MCF 10A (cell line): ENCODE measurements at regions of chr15 and their contacts with region 1.

Region 1: DNA sequence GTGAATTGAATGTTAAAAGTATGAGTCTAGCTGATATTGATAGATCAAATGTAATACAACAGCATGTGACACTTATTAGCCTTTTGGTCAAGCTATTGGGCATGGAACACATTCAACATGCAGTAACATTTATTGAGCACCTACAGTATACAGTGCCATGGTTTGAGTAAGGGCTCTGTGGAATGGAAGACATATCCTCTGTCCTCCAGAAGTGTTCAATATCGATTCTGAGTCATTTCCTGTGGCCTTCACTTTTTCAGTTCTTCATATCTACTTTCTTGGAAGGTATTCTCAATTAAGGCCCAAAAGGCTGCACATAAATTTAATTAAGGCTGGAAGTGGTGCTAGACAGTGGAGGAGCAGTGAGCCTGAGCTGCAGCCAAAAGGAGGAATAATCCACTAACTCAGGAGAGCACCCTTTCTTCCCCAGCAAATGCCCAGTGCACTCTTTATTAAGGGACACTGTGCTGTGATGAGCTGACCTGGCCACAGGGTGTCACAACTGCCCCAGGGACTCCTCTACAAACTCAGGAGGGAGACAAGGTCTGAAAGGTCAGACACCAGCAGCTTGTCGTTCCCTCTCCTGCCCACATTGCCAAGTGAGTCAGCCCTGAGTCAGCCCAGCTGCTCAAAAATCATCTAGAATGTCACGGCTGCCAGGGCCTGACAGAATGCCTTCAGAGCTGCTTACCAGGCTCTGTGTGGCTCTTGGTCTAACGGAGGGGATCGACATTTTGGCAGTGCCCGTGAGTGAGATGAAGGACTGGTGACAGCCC is 544.8 kb downstream of the AGBL1 start:
- DNase-seq: peak; percentile 97
- H3K4me3 Mint-ChIP-seq: peak overlapping the region; percentile 37
- H3K27ac Mint-ChIP-seq: peak overlapping the region; percentile 32
- H3K4me1 Mint-ChIP-seq: peaks cover 28% of the 10 kb centered on the region
- H3K27me3 Mint-ChIP-seq: no peaks in the 10 kb centered on the region
- CTCF ChIP-seq: peak; percentile 77

Region 2: GRCh38 chr15:85858586-85859375 is 765.7 kb before region 1 on chr15:
- CTCF ChIA-PET with region 1: interaction called, 3 read pairs
- POLR2A ChIA-PET with region 1: no interaction called
- intact Hi-C with region 1: loop called (anchors 2 kb)
- DNase-seq: peak; percentile 73
- H3K4me3 Mint-ChIP-seq: no peak overlapping the region
- H3K27ac Mint-ChIP-seq: no peak overlapping the region
- H3K4me1 Mint-ChIP-seq: no peaks in the 10 kb centered on the region
- H3K27me3 Mint-ChIP-seq: peaks cover 32% of the 10 kb centered on the region
- CTCF ChIP-seq: peak; percentile 89

Region 3: DNA sequence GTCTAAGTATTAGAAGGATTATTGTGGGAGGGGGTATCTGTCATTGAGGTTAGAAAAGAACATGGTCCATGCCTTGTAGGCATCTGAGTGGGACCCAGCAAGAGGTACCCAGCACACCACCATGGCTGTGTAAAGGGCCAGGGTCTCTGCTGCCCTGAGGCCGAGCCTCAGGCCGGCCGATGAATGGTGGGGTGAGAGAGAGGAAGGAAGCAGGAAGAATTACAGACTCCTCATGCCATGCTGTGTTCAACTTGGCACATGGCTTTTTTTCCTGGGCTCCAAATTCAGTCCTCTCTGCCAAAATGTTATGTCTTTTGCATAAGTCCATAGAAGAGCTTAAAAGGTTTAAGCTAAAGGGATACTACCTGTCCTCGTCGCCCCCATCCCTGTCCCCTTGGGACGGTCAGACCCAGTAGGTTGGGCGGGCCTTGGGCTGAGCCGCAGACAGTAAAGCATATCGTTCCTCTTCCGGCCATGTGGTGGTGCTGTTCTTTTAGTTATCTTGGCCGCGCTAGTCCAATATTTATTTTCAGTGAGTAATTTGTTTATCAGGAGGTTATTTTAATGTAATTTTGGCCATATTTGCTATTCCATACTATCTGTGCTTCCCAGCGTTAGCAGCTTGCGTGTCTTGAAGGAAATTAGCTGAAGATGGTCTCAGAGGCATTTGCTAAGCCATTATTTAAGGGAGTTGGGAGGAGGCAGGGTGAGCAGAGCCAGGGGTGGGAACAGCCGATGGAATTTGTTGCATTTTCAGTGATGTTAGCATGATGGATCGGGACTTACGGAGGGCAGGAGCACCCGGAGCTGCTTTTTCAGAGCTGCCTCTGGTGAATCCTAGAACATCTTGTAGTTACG is 392.4 kb before region 1 on chr15:
- CTCF ChIA-PET with region 1: interaction called, 16 read pairs
- POLR2A ChIA-PET with region 1: no interaction called
- intact Hi-C with region 1: loop called (anchors 1 kb)
- DNase-seq: peak; percentile 57
- H3K4me3 Mint-ChIP-seq: no peak overlapping the region
- H3K27ac Mint-ChIP-seq: no peak overlapping the region
- H3K4me1 Mint-ChIP-seq: no peaks in the 10 kb centered on the region
- H3K27me3 Mint-ChIP-seq: no peaks in the 10 kb centered on the region
- CTCF ChIP-seq: peak; percentile 82

Region 4: GRCh38 chr15:86502301-86502700 is 122.1 kb before region 1 on chr15:
- CTCF ChIA-PET with region 1: no interaction called
- POLR2A ChIA-PET with region 1: no interaction called
- intact Hi-C with region 1: no loop called
- DNase-seq: no peak
- H3K4me3 Mint-ChIP-seq: no peak overlapping the region
- H3K27ac Mint-ChIP-seq: no peak overlapping the region
- H3K4me1 Mint-ChIP-seq: no peaks in the 10 kb centered on the region
- H3K27me3 Mint-ChIP-seq: no peaks in the 10 kb centered on the region
- CTCF ChIP-seq: no peak

Region 5: DNA sequence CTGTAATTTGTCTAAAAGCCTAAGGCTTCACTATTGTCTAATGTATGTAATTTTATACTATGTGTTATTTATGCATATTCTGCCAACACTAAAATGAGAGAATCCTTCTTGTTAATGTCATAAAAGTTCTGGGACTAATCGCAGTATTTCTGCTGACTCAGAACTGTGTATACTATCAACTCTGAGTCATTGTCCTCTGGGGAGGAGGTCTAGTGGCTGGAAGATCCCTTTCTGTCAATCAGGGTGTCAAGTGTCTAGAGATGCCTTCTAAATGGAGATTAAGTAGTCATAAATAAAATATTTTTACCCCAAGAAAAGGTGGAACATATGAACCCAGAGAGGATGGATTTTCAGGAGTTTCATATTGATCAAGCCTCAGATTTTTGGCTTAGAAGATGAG is 71.3 kb before region 1 on chr15:
- CTCF ChIA-PET with region 1: no interaction called
- POLR2A ChIA-PET with region 1: no interaction called
- intact Hi-C with region 1: no loop called
- DNase-seq: peak; percentile 30
- H3K4me3 Mint-ChIP-seq: no peak overlapping the region
- H3K27ac Mint-ChIP-seq: no peak overlapping the region
- H3K4me1 Mint-ChIP-seq: peaks cover 32% of the 10 kb centered on the region
- H3K27me3 Mint-ChIP-seq: no peaks in the 10 kb centered on the region
- CTCF ChIP-seq: no peak

Region 6: DNA sequence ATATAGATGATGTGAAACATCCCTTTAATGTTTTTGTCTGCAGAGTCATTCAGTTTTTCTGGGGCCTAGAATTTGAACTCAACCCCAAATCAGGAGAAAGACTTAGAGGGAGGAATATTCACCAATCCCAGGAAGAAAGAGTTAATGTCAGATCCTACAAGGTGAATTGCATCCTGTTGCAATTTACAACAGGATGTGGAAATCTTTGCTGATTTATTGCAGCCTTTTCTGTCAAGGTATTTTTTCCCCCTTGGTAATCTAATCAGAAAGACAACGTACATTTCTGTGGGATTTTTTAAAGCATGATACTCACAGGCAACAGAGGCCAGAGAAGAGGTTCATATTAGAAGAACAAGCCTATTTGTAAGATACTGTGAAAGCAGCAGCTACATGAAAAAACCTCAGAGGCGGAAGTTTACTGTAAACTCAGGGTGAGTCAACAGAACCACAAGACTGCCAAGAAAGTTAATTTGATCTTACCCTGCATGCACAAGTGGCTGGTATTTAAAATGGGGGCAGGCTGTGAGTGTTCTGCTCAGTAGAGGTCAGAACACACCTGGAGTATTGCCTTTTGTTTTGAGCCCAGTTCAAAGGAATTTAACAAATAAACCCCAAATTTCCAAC is 12.9 kb before region 1 on chr15:
- CTCF ChIA-PET with region 1: interaction called, 25 read pairs
- POLR2A ChIA-PET with region 1: no interaction called
- intact Hi-C with region 1: no loop called
- DNase-seq: peak; percentile 70
- H3K4me3 Mint-ChIP-seq: peak overlapping the region; percentile 18
- H3K27ac Mint-ChIP-seq: peak overlapping the region; percentile 74
- H3K4me1 Mint-ChIP-seq: peaks cover 25% of the 10 kb centered on the region
- H3K27me3 Mint-ChIP-seq: no peaks in the 10 kb centered on the region
- CTCF ChIP-seq: no peak

Region 7: DNA sequence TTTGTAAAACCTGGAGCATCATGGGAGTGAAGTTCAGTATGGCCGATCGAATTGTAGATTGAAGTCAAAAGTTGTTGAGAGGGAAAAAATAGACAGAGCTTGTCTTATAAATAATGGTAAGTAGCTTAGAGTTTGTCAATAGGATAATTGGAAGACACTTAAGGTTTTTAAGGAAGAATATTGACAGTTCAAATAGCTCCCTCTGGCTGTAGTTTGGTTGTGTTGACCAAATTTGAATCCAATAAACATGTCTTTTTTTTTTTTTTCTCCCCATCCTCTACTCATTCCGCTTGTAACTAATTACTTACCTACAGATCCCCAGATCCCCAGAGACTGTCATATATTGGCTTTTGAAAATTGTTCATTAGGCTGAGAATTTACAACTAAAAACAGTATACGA is 132.2 kb after region 1 on chr15:
- CTCF ChIA-PET with region 1: interaction called, 29 read pairs
- POLR2A ChIA-PET with region 1: interaction called, 3 read pairs
- intact Hi-C with region 1: no loop called
- DNase-seq: no peak
- H3K4me3 Mint-ChIP-seq: no peak overlapping the region
- H3K27ac Mint-ChIP-seq: no peak overlapping the region
- H3K4me1 Mint-ChIP-seq: no peaks in the 10 kb centered on the region
- H3K27me3 Mint-ChIP-seq: no peaks in the 10 kb centered on the region
- CTCF ChIP-seq: peak; percentile 23

Region 8: GRCh38 chr15:86915811-86916331 is 291.4 kb after region 1 on chr15:
- CTCF ChIA-PET with region 1: interaction called, 6 read pairs
- POLR2A ChIA-PET with region 1: no interaction called
- intact Hi-C with region 1: loop called (anchors 2 kb)
- DNase-seq: peak; percentile 42
- H3K4me3 Mint-ChIP-seq: no peak overlapping the region
- H3K27ac Mint-ChIP-seq: no peak overlapping the region
- H3K4me1 Mint-ChIP-seq: no peaks in the 10 kb centered on the region
- H3K27me3 Mint-ChIP-seq: no peaks in the 10 kb centered on the region
- CTCF ChIP-seq: peak; percentile 51

Region 9: GRCh38 chr15:88454867-88455810 is 1830.7 kb after region 1 on chr15:
- CTCF ChIA-PET with region 1: interaction called, 7 read pairs
- POLR2A ChIA-PET with region 1: no interaction called
- intact Hi-C with region 1: loop called (anchors 10 kb)
- DNase-seq: peak; percentile 73
- H3K4me3 Mint-ChIP-seq: no peak overlapping the region
- H3K27ac Mint-ChIP-seq: no peak overlapping the region
- H3K4me1 Mint-ChIP-seq: peaks cover 1% of the 10 kb centered on the region
- H3K27me3 Mint-ChIP-seq: no peaks in the 10 kb centered on the region
- CTCF ChIP-seq: peak; percentile 58